Activated naive CD4-positive, alpha-beta T cell treated with anti-CD3 and anti-CD28 coated beads for 36 hours (primary cell): ENCODE measurements at regions of chr1 and their contacts with region 1.

Region 1: DNA sequence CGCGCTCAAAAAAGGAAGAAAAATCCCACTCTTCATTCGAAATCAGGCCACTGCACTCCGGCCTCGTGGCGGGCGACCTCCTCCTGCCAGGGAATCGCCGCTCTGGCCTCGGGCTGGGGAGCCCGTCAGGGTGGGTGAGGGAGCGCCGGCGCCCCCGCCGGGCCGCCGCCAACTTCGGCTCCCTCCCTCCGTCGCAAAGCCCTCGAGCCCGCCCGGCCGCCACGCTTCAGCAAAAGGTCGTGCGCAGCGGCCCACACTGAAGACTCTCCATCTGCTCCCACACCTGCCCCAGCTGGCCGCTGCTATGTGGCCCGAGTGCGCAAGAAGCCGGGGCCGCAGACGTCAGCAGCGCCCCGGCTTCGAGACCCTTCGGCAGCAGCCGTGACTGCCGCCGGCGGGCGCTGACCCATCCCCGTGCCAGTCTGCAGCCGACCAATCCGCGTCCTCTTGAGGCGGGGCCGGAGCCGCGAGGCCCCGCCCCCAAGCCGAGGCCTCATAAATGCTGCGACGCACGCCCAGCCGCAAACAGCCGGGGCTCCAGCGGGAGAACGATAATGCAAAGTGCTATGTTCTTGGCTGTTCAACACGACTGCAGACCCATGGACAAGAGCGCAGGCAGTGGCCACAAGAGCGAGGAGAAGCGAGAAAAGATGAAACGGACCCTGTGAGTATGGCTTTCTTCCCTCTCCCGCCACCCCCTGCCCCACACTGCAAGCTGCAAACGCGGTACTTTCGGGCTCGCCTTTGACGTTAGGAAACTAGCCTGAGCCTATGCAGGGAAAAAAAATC is at the start of gene RGS2:
- DNase-seq: peak; percentile 86
- H3K4me3 Mint-ChIP-seq: peak within 1 kb of the TSS; percentile 96
- H3K27ac Mint-ChIP-seq: peak within 1 kb of the TSS; percentile 82
- H3K4me1 Mint-ChIP-seq: peaks cover 31% of the 10 kb centered on the region
- H3K27me3 Mint-ChIP-seq: peaks cover 2% of the 10 kb centered on the region
- total RNA-seq, gene RGS2: 11.7 to 11.8 TPM

Region 2: DNA sequence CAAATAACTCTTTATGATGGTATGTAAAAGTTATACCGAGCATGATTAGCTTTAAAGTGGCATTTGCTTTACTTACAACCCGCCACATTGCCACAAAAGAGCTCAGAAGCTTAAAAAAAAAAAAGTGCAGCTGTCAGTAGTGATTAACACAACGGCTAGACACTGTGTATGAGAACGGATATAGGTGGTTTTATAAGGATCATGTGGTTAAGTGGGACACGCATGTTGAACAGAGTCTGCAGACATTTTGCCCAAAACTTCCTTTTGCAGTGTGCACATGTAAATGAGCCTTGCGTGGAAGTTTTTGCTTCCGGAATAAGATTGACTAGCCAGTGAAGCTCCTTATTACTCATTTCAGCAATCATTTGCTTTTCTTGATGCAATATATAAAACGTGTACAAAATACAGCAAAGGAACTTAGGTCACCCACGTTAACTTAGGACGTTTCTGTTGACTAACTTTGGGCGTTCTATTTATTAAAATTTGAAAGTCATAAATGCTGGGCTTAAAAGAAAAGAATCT is 291.9 kb before region 1 on chr1:
- CTCF ChIA-PET with region 1: no interaction called
- intact Hi-C with region 1: loop called (anchors 5 kb)
- DNase-seq: peak; percentile 76
- H3K4me3 Mint-ChIP-seq: peak overlapping the region; percentile 66
- H3K27ac Mint-ChIP-seq: peak overlapping the region; percentile 79
- H3K4me1 Mint-ChIP-seq: peaks cover 53% of the 10 kb centered on the region
- H3K27me3 Mint-ChIP-seq: no peaks in the 10 kb centered on the region

Region 3: GRCh38 chr1:192936313-192937018 is 127.8 kb after region 1 on chr1:
- CTCF ChIA-PET with region 1: no interaction called
- intact Hi-C with region 1: loop called (anchors 1 kb)
- DNase-seq: peak; percentile 20
- H3K4me3 Mint-ChIP-seq: no peak overlapping the region
- H3K27ac Mint-ChIP-seq: peak overlapping the region; percentile 32
- H3K4me1 Mint-ChIP-seq: peaks cover 12% of the 10 kb centered on the region
- H3K27me3 Mint-ChIP-seq: no peaks in the 10 kb centered on the region

Region 4: GRCh38 chr1:193059268-193060225 is 250.8 kb after region 1 on chr1 and contains the starts of genes RO60 and UCHL5:
- CTCF ChIA-PET with region 1: interaction called, 8 read pairs
- intact Hi-C with region 1: loop called (anchors 1 kb)
- DNase-seq: peak; percentile 97
- H3K4me3 Mint-ChIP-seq: peak within 1 kb of the TSS; percentile 94
- H3K27ac Mint-ChIP-seq: peak within 1 kb of the TSS; percentile 97
- H3K4me1 Mint-ChIP-seq: peaks cover 59% of the 10 kb centered on the region
- H3K27me3 Mint-ChIP-seq: no peaks in the 10 kb centered on the region
- total RNA-seq, gene RO60: 42.8 to 48.0 TPM
- total RNA-seq, gene UCHL5: 63.4 to 68.8 TPM

Region 5: DNA sequence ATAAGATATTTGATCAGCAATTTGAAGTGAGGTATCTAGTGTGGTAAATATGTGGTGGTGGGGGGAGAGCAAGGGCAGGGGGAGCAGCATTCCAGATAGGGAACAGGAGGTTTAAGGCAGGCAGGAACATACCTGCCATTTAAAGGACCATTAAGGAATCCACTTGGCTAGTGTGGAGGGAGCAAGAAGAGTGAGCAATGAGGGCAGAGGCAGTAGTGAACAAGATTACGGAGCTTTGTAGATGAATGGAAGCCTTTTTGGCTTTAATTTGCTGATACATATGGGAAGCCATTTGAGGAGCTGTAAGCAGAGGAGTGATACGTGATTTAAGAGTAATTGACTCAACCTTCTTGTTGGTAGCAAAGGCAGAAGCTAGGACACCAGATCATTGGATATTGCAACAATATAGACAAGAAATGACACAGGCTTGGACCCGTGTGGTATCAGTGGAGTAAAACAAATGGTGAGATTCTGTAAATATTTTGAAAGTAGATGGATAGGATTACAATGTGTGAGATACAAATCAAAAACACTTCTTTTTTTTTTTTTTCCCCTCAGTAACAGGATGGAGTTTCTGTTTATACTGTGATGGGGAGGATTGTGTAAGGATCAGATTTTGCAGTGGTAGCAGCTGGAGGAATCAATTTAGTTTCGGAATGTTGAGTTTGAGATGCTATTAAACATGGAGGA is 451.5 kb after region 1 on chr1:
- CTCF ChIA-PET with region 1: no interaction called
- intact Hi-C with region 1: loop called (anchors 10 kb)
- DNase-seq: no peak
- H3K4me3 Mint-ChIP-seq: no peak overlapping the region
- H3K27ac Mint-ChIP-seq: no peak overlapping the region
- H3K4me1 Mint-ChIP-seq: peaks cover 7% of the 10 kb centered on the region
- H3K27me3 Mint-ChIP-seq: no peaks in the 10 kb centered on the region

Region 6: GRCh38 chr1:193537266-193538002 is 728.7 kb after region 1 on chr1:
- CTCF ChIA-PET with region 1: no interaction called
- intact Hi-C with region 1: loop called (anchors 1 kb)
- DNase-seq: peak; percentile 91
- H3K4me3 Mint-ChIP-seq: no peak overlapping the region
- H3K27ac Mint-ChIP-seq: peak overlapping the region; percentile 26
- H3K4me1 Mint-ChIP-seq: peaks cover 43% of the 10 kb centered on the region
- H3K27me3 Mint-ChIP-seq: no peaks in the 10 kb centered on the region